CD14-positive monocyte (primary cell): ENCODE measurements at regions of chr1 and their contacts with region 1.

Region 1: GRCh38 chr1:6602669-6603237 is at the start of gene KLHL21:
- DNase-seq: peak; percentile 86 to 93 (median 90)
- H3K4me3 ChIP-seq: peak within 1 kb of the TSS; percentile 74 to 93 (median 78)
- H3K4me3 Mint-ChIP-seq: peak within 1 kb of the TSS; percentile 89 to 95
- H3K27ac ChIP-seq: peak within 1 kb of the TSS; percentile 98 to 99
- H3K27ac Mint-ChIP-seq: peak within 1 kb of the TSS; percentile 97 to 99 (median 98)
- H3K4me1 ChIP-seq: peaks cover 40 to 55% of the 10 kb centered on the region in 2 donors
- H3K4me1 Mint-ChIP-seq: peaks cover 33% of the 10 kb centered on the region
- H3K27me3 ChIP-seq: no peaks in the 10 kb centered on the region
- H3K27me3 Mint-ChIP-seq: peaks cover 3 to 9% (median 9%) of the 10 kb centered on the region in 3 donors
- CTCF ChIP-seq: no peak
- polyA plus RNA-seq, gene KLHL21: 5.9 to 31.0 (median 7.3) TPM

Region 2: GRCh38 chr1:6579374-6580118 is 23.2 kb before region 1 on chr1 and contains the start of gene ZBTB48:
- intact Hi-C with region 1: loop called in 1 of 2 experiments (anchors 2 kb)
- DNase-seq: peak; percentile 97 to 98 (median 98)
- H3K4me3 ChIP-seq: peak within 1 kb of the TSS; percentile 61 to 83 (median 76)
- H3K4me3 Mint-ChIP-seq: peak within 1 kb of the TSS; percentile 96 to 97
- H3K27ac ChIP-seq: peak within 1 kb of the TSS; percentile 88 to 97
- H3K27ac Mint-ChIP-seq: peak within 1 kb of the TSS; percentile 97 to 100 (median 99)
- H3K4me1 ChIP-seq: peaks cover 33 to 34% of the 10 kb centered on the region in 2 donors
- H3K4me1 Mint-ChIP-seq: peaks cover 35% of the 10 kb centered on the region
- H3K27me3 ChIP-seq: no peaks in the 10 kb centered on the region
- H3K27me3 Mint-ChIP-seq: peaks cover 0 to 3% (median 1%) of the 10 kb centered on the region in 3 donors
- CTCF ChIP-seq: no peak
- polyA plus RNA-seq, gene ZBTB48: 13.2 to 94.2 (median 23.0) TPM

Region 3: GRCh38 chr1:6613361-6614018 is 10.7 kb after region 1 on chr1 and contains the start of gene PHF13:
- intact Hi-C with region 1: loop called in 1 of 2 experiments (anchors 1 kb)
- DNase-seq: peak; percentile 98
- H3K4me3 ChIP-seq: peak within 1 kb of the TSS; percentile 72 to 90 (median 89)
- H3K4me3 Mint-ChIP-seq: peak within 1 kb of the TSS; percentile 88 to 94
- H3K27ac ChIP-seq: peak within 1 kb of the TSS; percentile 31 to 76
- H3K27ac Mint-ChIP-seq: peak within 1 kb of the TSS; percentile 72 to 90 (median 80)
- H3K4me1 ChIP-seq: peaks cover 16 to 19% of the 10 kb centered on the region in 2 donors
- H3K4me1 Mint-ChIP-seq: peaks cover 16% of the 10 kb centered on the region
- H3K27me3 ChIP-seq: peaks cover 5 to 13% of the 10 kb centered on the region in 2 donors
- H3K27me3 Mint-ChIP-seq: peaks cover 11 to 21% (median 17%) of the 10 kb centered on the region in 3 donors
- CTCF ChIP-seq: no peak
- polyA plus RNA-seq, gene PHF13: 1.0 to 7.3 (median 1.7) TPM

Region 4: DNA sequence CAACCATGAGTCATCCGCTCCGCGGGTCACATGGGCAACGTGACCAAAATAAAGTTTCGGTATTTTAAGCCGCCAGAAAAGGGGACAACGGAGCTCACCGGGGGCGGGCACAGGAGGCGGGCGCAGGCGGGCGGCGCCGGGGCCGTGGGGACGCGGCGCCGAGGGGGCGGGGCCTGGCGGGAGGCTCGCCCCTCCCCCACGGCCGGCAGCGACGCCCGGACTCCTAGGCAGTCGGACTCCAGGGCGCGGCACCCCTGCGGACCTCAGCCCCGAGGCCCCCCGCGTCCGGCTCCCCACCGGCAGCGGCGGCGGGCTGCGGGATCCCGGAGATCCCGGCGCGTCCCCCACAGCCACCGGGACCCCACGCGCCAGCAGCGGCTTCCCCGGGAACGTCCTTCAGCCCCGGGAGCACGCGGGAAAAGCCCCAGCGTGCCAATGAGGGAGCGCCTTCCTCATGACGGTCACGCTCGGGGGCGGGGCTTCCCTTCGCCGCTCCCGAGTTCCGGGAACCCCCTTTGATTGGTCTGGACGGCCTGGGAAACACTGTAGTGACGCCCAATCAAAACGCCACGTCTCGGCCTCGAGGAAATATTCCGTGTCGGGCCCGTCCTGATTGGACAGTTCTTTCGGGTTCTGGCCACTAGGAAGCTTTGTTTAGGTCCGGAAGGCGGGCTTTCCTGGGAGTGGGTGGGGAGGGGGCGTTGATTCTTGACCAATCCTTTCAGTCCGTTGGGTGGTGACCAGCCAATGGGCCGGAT is 182.0 kb after region 1 on chr1:
- intact Hi-C with region 1: loop called in 1 of 2 experiments (anchors 10 kb)
- DNase-seq: peak; percentile 100
- H3K4me3 ChIP-seq: peak overlapping the region; percentile 75 to 87 (median 85)
- H3K4me3 Mint-ChIP-seq: peak overlapping the region; percentile 85 to 93
- H3K27ac ChIP-seq: peak overlapping the region; percentile 97 to 98
- H3K27ac Mint-ChIP-seq: peak overlapping the region; percentile 93 to 98 (median 97)
- H3K4me1 ChIP-seq: peaks cover 25 to 29% of the 10 kb centered on the region in 2 donors
- H3K4me1 Mint-ChIP-seq: peaks cover 49% of the 10 kb centered on the region
- H3K27me3 ChIP-seq: no peaks in the 10 kb centered on the region
- H3K27me3 Mint-ChIP-seq: peaks cover 0 to 3% (median 0%) of the 10 kb centered on the region in 3 donors
- CTCF ChIP-seq: no peak